ENCODE measurements at regions of chr19 and their contacts with region 1.

Region 1: GRCh38 chr19:51439021-51439465 is 19.2 kb downstream of the SIGLEC8 start:
- DNase-seq: peak in 1 of 2 donors; percentile 62
- H3K4me3 ChIP-seq: no peak overlapping the region
- H3K27ac ChIP-seq: no peak overlapping the region
- H3K4me1 ChIP-seq: peaks cover 0 to 4% (median 0%) of the 10 kb centered on the region in 4 donors
- H3K27me3 ChIP-seq: peaks cover 0 to 75% (median 7%) of the 10 kb centered on the region in 3 donors
- CTCF ChIP-seq: peak in 2 of 7 experiments; percentile 10 to 22
- EP300 ChIP-seq: no peak
- POLR2A ChIP-seq: no peak

Region 2: DNA sequence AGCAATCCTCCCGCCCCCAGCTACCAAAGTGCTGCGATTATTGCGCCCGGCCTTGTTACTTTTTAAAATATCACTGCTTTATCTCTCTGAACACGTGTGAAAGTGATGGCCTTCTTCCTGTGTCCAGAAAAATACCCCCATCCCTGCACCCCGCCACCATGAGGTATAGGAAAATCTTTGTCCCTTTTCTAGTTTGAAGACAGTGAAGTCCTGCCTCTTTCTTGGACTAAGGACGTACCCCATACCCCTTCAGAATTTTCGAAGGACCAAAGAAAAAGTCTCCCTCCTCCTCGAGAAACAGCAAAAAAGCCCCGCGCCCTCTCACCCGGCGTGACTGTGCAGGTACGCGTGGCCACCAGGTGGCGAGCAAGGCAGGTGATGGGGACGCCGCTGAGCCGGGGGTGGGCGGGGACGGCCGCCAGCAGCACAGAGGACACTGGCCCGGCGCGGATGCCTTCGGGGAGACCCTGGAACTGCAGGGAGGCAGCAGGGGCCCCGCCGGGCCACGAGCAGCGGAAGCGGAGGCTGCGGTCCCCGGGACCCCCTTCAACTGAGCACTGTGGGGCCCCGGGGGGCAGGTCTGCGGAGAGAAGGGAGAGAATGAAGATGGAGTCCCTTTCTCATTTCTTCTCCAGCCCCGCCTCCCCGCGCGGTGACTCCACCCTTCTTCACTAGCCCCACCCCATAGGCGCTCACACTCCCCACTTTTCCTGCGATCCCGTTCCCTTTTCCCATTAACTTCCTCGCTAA is 100.3 kb before region 1 on chr19:
- intact Hi-C with region 1: loop called (anchors 10 kb)
- DNase-seq: peak; percentile 87 to 94
- H3K4me3 ChIP-seq: peak overlapping the region; percentile 55 to 83 (median 64)
- H3K27ac ChIP-seq: peak overlapping the region; percentile 16 to 87 (median 80)
- H3K4me1 ChIP-seq: peaks cover 8 to 27% (median 24%) of the 10 kb centered on the region in 4 donors
- H3K27me3 ChIP-seq: peaks cover 0 to 5% (median 0%) of the 10 kb centered on the region in 3 donors
- CTCF ChIP-seq: peak in 5 of 7 experiments; percentile 78 to 93 (median 87)
- EP300 ChIP-seq: no peak
- POLR2A ChIP-seq: no peak

Region 3: DNA sequence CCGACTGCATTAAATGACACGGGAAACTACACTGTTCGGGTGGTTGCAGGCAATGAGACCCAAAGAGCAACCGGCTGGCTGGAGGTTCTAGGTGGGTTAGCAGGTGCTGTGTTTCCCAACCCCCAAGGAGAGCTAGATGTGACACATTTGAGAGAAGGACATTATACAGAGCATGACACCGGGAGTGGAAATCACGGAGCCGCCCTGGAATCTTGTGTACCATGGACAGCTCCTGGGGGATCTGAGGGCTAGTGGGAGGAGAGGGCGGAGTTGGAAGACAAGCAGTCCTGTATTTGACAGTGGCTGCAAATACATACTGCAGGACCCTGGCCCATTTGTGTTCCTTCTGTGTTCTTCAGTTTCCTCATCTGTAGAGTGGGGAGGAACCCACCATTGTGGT is 41.5 kb after region 1 on chr19:
- intact Hi-C with region 1: no loop called
- DNase-seq: peak in 1 of 2 donors; percentile 62
- H3K4me3 ChIP-seq: no peak overlapping the region
- H3K27ac ChIP-seq: no peak overlapping the region
- H3K4me1 ChIP-seq: no peaks in the 10 kb centered on the region
- H3K27me3 ChIP-seq: peaks cover 0 to 70% (median 16%) of the 10 kb centered on the region in 3 donors
- CTCF ChIP-seq: no peak
- EP300 ChIP-seq: no peak
- POLR2A ChIP-seq: no peak

Measured in stomach (tissue), 19 donors.